Dorsolateral prefrontal cortex (tissue), 120 donors: ENCODE measurements at regions of chr5 and their contacts with region 1.

Region 1: DNA sequence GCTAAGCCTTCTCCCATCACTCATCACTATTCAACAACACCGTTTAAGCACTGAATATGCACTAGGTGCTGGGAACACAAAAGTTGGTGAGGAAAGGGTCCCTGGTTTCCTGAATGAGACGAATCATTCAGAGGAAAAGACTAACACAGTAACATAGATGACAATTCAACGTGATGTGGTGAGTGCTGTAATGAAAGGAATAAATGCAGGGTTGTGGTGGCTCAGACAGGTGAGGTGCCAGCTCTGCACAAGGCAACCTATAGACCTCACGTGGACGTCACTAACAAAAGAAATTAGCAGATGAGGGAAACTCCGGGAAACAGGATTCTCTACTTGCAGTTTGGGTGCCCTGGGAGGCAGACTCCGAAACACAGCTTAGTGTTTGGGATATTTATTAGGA is 40.0 kb upstream of the ERBIN start:
- DNase-seq: no peak
- H3K4me3 ChIP-seq: peak overlapping the region in 1 of 59 donors; percentile 5
- H3K27ac ChIP-seq: peak overlapping the region in 15 of 59 donors; percentile 1 to 76 (median 32)
- H3K27me3 ChIP-seq: no peaks in the 10 kb centered on the region
- CTCF ChIP-seq: no peak

Region 2: DNA sequence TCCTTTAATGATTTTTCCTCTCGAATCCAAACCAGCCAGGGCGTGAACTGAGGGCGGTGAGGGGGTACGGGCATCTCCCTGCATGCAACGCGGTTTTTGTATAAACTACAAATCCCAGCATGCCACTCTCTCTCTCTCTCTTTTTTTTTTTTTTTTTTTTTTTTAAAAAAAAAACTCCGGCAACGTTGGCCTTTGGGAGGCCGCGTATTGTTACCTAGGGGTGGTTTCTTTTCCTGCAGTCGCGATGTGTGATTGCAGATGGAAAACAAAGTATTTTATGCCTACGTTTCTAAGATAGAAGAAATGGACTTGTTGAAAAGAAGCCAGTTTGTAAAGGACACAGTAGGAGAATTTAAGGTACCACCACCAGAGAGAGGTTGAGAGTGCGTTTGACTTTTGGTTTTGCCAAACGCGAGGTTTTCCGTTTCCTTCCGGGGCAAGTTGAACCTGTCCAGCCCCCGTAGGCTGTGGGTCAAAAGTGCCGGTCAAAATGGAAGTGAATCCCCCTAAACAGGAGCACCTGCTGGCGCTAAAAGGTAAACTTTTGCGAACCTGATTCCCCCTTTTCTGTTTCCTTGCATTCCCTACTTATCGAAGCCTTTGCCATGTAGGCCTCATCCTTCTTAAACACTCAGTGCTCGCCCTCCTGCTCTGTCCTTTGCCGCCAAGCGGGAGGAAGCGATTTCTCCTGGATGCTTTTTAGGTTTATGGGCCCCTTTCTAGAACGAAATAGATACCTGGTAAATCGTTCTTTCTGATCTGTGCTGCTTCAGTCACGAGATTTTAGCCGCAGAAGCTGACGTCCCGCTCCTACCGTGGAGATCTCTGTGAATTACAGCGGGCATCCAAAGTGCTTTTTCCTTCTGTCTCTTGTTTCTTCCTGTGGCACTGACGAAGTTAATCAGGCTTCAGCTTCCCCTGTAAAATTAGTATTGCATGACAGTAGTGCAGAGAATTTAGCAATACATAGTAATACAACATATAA is 261.5 kb before region 1 on chr5 and contains the starts of genes SHLD3 and TRAPPC13:
- intact Hi-C with region 1: no loop called
- DNase-seq: peak; percentile 73 to 88 (median 84)
- H3K4me3 ChIP-seq: peak within 1 kb of the TSS; percentile 71 to 100 (median 98)
- H3K27ac ChIP-seq: peak within 1 kb of the TSS; percentile 73 to 99 (median 93)
- H3K27me3 ChIP-seq: no peaks in the 10 kb centered on the region
- CTCF ChIP-seq: peak in 15 of 56 donors; percentile 2 to 43 (median 18)
- total RNA-seq, gene SHLD3: 1.4 to 7.4 (median 3.9) TPM
- total RNA-seq, gene TRAPPC13: 17.4 to 49.3 (median 32.9) TPM

Region 3: GRCh38 chr5:65840071-65840470 is 46.3 kb before region 1 on chr5:
- intact Hi-C with region 1: loop called in 1 of 2 experiments (anchors 5 kb)
- DNase-seq: no peak
- H3K4me3 ChIP-seq: no peak overlapping the region
- H3K27ac ChIP-seq: peak overlapping the region in 5 of 59 donors; percentile 3 to 37 (median 15)
- H3K27me3 ChIP-seq: no peaks in the 10 kb centered on the region
- CTCF ChIP-seq: no peak